Head of caudate nucleus (tissue), 42 donors: ENCODE measurements at regions of chr3 and their contacts with region 1.

Region 1: DNA sequence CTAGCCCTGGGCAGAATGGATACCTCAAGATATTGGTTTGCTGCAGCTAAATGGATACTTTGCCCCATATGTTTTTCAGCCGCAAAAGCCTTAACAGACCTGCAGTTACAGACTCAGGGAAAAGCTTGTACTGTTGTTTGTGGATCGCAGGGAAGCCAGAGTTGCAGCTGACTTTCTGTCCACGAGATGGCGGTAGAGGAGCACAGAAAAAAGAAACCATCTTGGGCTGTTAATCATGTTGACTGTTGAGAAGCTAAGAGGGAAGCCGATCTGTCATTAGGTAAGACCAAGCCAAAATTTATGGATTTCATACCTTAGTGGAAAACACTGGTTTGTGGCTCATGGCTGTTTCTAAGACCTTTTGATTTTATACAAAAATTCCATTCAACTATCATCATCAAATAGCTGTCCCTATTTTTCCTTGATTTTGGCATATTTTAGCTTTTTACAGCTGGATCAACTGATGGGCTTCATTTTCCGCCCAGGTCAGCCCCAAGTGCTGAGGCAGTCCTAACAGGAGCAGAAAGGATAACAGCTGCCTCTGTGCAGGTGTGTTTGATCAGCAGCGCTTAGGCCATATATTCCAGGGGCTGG is 205.7 kb upstream of the ZPLD1 start:
- DNase-seq: peak; percentile 28 to 92 (median 81)

Region 2: DNA sequence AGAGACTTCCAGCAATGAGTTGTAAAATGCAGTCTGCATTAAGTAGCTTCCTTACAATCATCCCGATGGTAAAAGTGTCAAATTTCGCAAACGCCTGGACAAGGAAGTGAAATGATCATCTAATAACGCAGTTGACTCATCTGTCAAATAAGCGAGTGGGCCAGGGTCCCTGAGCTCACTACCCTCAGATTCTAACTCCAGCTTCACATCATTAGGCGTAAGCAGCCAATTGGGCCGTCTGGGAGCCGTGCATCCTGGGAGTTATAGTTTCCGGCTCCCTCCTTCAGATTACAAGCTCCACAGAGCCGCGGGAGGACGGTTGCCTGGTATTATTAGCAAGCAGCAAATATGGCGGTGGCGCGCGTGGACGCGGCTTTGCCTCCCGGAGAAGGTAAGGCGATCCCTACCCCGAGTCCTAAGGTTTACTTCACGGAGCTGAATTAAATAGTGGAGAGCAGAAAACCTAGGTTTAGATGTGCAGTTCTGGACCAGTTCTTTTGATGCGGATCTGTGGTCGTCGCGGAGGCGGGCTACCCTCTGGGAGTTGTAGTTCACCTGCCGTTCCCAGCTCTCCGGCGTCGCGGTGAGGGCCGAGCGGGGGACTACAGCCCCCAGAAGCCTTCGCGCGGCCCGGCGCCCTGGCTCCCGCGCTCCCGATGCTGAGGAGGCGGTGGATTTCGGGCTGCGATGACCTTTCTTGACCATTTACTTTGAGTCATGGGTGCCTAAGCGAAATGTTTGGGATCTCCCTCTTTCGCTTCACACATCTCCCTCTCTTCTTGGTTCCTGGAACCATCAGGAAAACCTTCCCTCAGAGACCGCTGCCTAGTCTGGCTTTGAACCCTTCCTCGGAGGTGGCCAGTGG is 504.6 kb before region 1 on chr3 and contains the start of gene CEP97:
- intact Hi-C with region 1: loop called (anchors 10 kb)
- DNase-seq: peak; percentile 86 to 98 (median 94)

Region 3: GRCh38 chr3:101809178-101810021 is 419.8 kb before region 1 on chr3:
- intact Hi-C with region 1: loop called (anchors 5 kb)
- DNase-seq: peak in 17 of 42 donors; percentile 3 to 78 (median 28)

Region 4: GRCh38 chr3:102129760-102130608 is 99.2 kb before region 1 on chr3:
- intact Hi-C with region 1: no loop called
- DNase-seq: peak in 19 of 42 donors; percentile 9 to 63 (median 35)

Region 5: DNA sequence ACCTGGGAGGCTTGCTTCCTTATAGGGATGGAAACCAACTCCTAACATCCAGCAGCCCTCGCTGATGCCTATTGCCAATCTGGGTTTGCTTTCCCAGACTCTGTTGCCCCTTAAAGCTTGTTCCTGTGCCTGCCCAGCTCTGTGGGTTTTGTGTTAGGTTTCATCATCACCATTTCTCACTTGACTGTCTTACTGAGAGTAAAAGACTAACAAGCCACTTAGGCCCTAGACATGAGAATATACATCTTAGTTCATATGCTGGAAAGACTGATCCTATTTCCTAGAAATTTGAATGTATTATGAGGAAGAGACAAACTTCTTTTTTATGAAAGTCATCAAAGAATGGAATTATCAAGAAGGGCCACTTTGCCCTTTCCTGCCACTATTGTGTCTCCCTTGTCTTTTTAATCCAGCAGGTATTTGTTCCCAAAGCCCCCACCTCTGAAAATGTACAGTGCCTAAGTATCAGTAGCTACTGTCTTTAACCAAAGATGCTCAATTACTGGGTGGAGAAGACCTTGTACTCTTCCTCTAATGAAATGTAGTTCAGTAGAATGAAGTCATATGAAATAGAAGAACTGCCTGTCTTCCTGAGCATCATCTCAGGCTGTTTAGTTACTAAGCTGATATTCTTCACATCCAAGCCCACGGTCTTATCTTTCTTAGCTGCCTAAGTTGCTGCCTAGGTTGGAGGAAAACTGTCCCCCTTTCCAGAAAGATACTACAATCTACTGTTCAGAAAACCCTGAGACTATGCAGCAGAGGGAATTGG is 145.9 kb after region 1 on chr3:
- intact Hi-C with region 1: no loop called
- DNase-seq: no peak

Region 6: GRCh38 chr3:102536456-102536855 is 307.3 kb after region 1 on chr3:
- intact Hi-C with region 1: loop called (anchors 5 kb)
- DNase-seq: peak in 18 of 42 donors; percentile 2 to 41 (median 8)